ENCODE measurements at regions of chr2 and their contacts with region 1.

Region 1: GRCh38 chr2:168687314-168687713 is 115.1 kb upstream of the NOSTRIN start:
- DNase-seq: no peak
- ATAC-seq: peak in 3 of 4 donors; percentile 56 to 75 (median 61)
- H3K4me3 ChIP-seq: no peak overlapping the region
- H3K27ac ChIP-seq: no peak overlapping the region
- H3K4me1 ChIP-seq: peaks cover 7% of the 10 kb centered on the region
- H3K27me3 ChIP-seq: no peaks in the 10 kb centered on the region
- CTCF ChIP-seq: peak; percentile 47

Region 2: GRCh38 chr2:168712049-168712448 is 24.7 kb after region 1 on chr2:
- intact Hi-C with region 1: loop called in 1 of 2 experiments (anchors 1 kb)
- DNase-seq: no peak
- ATAC-seq: no peak
- H3K4me3 ChIP-seq: no peak overlapping the region
- H3K27ac ChIP-seq: no peak overlapping the region
- H3K4me1 ChIP-seq: no peaks in the 10 kb centered on the region
- H3K27me3 ChIP-seq: no peaks in the 10 kb centered on the region
- CTCF ChIP-seq: no peak

Region 3: GRCh38 chr2:168992591-168993349 is 305.5 kb after region 1 on chr2:
- intact Hi-C with region 1: no loop called
- DNase-seq: no peak
- ATAC-seq: no peak
- H3K4me3 ChIP-seq: no peak overlapping the region
- H3K27ac ChIP-seq: no peak overlapping the region
- H3K4me1 ChIP-seq: no peaks in the 10 kb centered on the region
- H3K27me3 ChIP-seq: no peaks in the 10 kb centered on the region
- CTCF ChIP-seq: no peak

Measured in psoas muscle (tissue), 8 donors.